Heart left ventricle (tissue), 16 donors: ENCODE measurements at regions of chr6 and their contacts with region 1.

Region 1: GRCh38 chr6:143842902-143843676 is at the start of gene LTV1:
- DNase-seq: peak; percentile 97 to 98 (median 97)
- ATAC-seq: peak; percentile 100
- H3K4me3 ChIP-seq: peak within 1 kb of the TSS; percentile 55 to 94 (median 82)
- H3K27ac ChIP-seq: peak within 1 kb of the TSS; percentile 80 to 96 (median 93)
- H3K4me1 ChIP-seq: peaks cover 0 to 18% (median 11%) of the 10 kb centered on the region in 12 donors
- H3K27me3 ChIP-seq: no peaks in the 10 kb centered on the region
- CTCF ChIP-seq: peak in 4 of 12 donors; percentile 3 to 27 (median 20)
- POLR2A ChIP-seq: peak in 1 of 2 donors; percentile 83
- total RNA-seq, gene LTV1: 9.8 to 16.5 (median 12.9) TPM

Region 2: DNA sequence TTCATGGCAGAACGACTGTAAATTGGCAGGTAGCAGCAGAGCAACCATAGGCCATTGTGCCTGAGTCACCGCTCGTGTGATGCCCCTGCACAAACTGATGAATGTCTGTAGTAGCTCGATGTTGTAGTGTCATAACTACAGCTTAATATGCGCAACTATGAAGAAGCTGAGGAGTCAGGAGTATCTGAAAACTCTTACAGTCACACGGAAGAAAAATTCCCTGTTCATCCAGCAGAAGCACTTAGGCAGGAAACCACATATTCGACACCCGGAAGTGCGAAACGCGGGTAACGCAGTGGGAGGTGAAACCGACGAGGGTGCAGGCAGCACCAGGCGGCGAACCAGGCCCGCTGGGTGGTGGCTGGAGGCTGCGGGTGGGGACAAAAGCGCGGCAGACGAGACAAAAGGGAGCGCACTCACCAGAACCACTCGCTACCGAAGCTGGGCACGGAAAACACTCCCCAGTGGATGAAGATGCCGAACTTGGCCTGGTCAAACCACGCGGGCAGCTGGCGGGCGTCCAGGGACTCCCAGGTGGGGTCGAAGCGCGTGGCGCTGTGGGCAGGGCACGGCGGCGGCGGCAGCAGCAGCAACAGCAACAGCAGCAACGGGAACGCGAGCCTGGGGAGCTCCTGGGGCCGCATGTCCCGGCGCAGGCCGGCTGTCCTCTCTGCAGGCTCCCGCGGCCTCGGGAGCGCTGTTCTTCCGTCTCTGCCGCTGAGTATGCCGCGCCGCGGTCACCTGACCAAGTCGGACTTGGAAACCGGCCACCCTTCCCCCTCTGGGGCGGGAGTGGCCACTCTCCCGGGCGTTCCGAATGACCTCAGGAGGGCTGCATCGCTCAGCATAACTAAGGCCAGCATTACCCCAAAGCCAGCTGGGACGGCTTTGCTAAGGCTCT is 331.8 kb before region 1 on chr6 and contains the start of gene FUCA2:
- intact Hi-C with region 1: loop called in 1 of 10 experiments (anchors 5 kb)
- DNase-seq: peak; percentile 94 to 96 (median 95)
- ATAC-seq: peak; percentile 82 to 93 (median 90)
- H3K4me3 ChIP-seq: peak within 1 kb of the TSS; percentile 47 to 92 (median 74)
- H3K27ac ChIP-seq: peak within 1 kb of the TSS; percentile 26 to 97 (median 90)
- H3K4me1 ChIP-seq: peaks cover 0 to 48% (median 31%) of the 10 kb centered on the region in 12 donors
- H3K27me3 ChIP-seq: no peaks in the 10 kb centered on the region
- CTCF ChIP-seq: peak in 1 of 12 donors; percentile 13
- POLR2A ChIP-seq: peak in 1 of 2 donors; percentile 65
- total RNA-seq, gene FUCA2: 18.0 to 68.6 (median 34.8) TPM

Region 3: DNA sequence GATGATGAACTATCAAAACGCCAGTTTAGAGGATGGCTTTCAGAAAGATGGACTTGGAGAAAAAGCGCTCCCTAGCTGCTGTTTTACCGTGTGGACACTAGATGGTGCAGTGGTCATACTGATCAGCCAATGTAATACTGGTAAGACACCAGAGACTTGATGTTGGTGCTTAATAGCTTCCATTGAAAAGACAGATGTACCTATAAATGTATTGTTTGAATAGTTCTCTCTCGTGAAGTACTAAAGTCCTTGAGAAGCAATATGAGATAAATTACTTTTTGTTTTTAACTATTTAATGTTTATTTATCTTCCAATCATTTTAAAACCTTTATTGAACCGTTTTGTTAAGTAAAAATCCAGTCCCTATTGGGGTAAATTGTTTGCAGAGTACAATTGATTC is 267.6 kb before region 1 on chr6:
- intact Hi-C with region 1: loop called in 8 of 10 experiments (anchors 2 to 10 kb)
- DNase-seq: peak in 2 of 5 donors; percentile 57 to 60
- ATAC-seq: peak; percentile 55 to 91 (median 88)
- H3K4me3 ChIP-seq: no peak overlapping the region
- H3K27ac ChIP-seq: peak overlapping the region in 3 of 12 donors; percentile 35 to 60 (median 49)
- H3K4me1 ChIP-seq: peaks cover 0 to 5% (median 0%) of the 10 kb centered on the region in 12 donors
- H3K27me3 ChIP-seq: no peaks in the 10 kb centered on the region
- CTCF ChIP-seq: peak; percentile 80 to 96 (median 92)
- POLR2A ChIP-seq: no peak

Region 4: GRCh38 chr6:143598466-143599080 is 244.5 kb before region 1 on chr6:
- intact Hi-C with region 1: loop called in 1 of 10 experiments (anchors 5 kb)
- DNase-seq: peak in 1 of 5 donors; percentile 32
- ATAC-seq: peak; percentile 41 to 85 (median 52)
- H3K4me3 ChIP-seq: no peak overlapping the region
- H3K27ac ChIP-seq: peak overlapping the region in 6 of 12 donors; percentile 6 to 46 (median 26)
- H3K4me1 ChIP-seq: peaks cover 0 to 45% (median 21%) of the 10 kb centered on the region in 12 donors
- H3K27me3 ChIP-seq: no peaks in the 10 kb centered on the region
- CTCF ChIP-seq: no peak
- POLR2A ChIP-seq: no peak

Region 5: GRCh38 chr6:143677891-143678791 is 164.9 kb before region 1 on chr6 and contains the start of gene PHACTR2:
- intact Hi-C with region 1: loop called in 9 of 10 experiments (anchors 2 to 10 kb)
- DNase-seq: peak; percentile 85 to 90 (median 87)
- ATAC-seq: peak; percentile 84 to 96 (median 91)
- H3K4me3 ChIP-seq: peak within 1 kb of the TSS; percentile 49 to 97 (median 80)
- H3K27ac ChIP-seq: peak within 1 kb of the TSS; percentile 94 to 99 (median 96)
- H3K4me1 ChIP-seq: peaks cover 0 to 64% (median 37%) of the 10 kb centered on the region in 12 donors
- H3K27me3 ChIP-seq: no peaks in the 10 kb centered on the region
- CTCF ChIP-seq: no peak
- POLR2A ChIP-seq: peak in 1 of 2 donors; percentile 82
- total RNA-seq, gene PHACTR2: 47.8 to 101 (median 68.3) TPM

Region 6: GRCh38 chr6:144008120-144008811 is 165.2 kb after region 1 on chr6 and contains the start of gene PLAGL1:
- intact Hi-C with region 1: loop called in 6 of 10 experiments (anchors 5 to 10 kb)
- DNase-seq: peak; percentile 74 to 87 (median 79)
- ATAC-seq: peak; percentile 86 to 97 (median 96)
- H3K4me3 ChIP-seq: peak within 1 kb of the TSS; percentile 28 to 78 (median 62)
- H3K27ac ChIP-seq: peak within 1 kb of the TSS in 11 of 12 donors; percentile 27 to 79 (median 73)
- H3K4me1 ChIP-seq: peaks cover 0 to 4% (median 0%) of the 10 kb centered on the region in 12 donors
- H3K27me3 ChIP-seq: no peaks in the 10 kb centered on the region
- CTCF ChIP-seq: no peak
- POLR2A ChIP-seq: peak in 1 of 2 donors; percentile 78
- total RNA-seq, gene PLAGL1: 6.6 to 27.3 (median 10.0) TPM